CD8-positive, alpha-beta T cell (primary cell): ENCODE measurements at regions of chr1 and their contacts with region 1.

Region 1: DNA sequence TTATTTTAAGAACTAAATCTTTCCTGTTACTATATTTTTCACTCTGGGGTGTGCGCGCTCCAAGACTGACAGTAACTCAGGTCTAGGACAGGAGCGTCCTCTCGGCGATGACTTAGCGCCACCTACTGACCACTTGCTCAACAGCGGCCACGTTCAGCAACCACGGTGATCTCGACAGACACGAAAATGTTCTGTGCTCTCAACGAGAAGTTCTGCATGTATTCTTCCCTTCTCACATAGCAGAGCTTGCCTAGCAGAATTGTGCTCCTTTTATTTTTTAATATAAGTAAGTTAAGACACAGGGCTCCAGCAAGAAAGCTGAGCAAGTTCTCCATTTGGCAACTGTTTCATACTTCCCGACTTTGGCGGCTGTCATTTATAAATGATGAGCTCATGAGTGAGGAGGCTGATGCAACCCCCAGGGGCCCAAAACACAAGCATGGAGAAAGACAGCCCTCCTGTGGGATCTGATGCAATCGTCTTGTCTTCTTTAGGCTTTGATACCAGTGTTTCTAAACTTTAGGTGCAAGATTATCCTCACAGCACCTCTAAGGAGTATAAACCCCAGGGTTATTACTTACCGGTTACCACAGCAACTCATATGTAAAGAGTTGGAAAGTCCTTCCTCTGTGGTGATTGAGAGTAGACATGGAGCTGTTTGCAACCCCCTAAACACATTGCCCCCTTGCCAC is 92.6 kb downstream of the HHIPL2 start:
- DNase-seq: peak; percentile 68 to 91 (median 83)
- ATAC-seq: peak; percentile 99
- H3K4me3 ChIP-seq: no peak overlapping the region
- H3K4me3 Mint-ChIP-seq: peak overlapping the region; percentile 0
- H3K27ac ChIP-seq: no peak overlapping the region
- H3K27ac Mint-ChIP-seq: peak overlapping the region; percentile 2
- H3K4me1 ChIP-seq: peaks cover 6% of the 10 kb centered on the region
- H3K4me1 Mint-ChIP-seq: peaks cover 16% of the 10 kb centered on the region
- H3K27me3 ChIP-seq: no peaks in the 10 kb centered on the region
- H3K27me3 Mint-ChIP-seq: no peaks in the 10 kb centered on the region
- CTCF ChIP-seq: peak; percentile 90

Region 2: DNA sequence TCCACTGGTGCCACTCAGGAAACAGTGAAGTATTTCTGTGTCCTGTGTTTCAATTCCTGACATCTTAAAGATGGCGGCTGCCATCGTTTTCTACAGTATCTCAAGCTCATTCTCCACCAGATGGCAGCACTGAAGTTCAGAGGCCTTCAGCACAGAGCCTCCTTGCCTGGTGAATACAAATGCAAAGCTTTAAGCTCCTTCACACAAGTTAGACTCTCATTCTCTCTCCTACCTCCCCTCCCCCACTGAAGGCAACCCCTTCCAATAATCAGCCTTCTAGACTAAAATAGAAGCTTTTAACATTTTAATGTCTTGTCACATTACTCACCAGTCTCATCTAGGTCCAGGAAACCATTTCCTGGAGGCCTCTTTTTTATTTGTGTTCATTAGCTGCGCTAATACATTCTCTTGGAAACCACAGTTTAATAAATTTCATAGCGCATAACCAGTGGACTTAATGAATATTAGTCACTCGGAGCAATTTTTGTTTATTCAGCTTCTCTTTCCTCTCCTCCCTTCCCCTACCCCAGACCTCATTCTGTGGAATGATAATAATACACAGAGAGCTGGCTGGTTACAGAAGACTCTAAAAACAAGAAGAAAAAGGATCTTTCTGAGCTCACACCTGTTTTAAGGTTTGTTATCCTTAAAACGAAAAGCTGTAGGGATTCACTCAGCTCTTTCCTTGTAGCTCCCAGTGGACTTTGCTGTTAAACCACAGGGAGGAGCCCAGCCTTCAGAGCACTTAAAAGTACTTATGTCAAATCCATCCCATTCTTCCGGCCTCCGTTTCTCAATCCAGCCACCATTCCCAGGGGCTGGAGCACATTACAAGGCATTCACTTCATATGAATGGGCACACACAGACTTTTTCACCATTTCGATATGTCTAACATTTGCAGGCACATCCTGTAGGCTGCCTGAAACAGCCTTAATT is 1191.2 kb before region 1 on chr1:
- CTCF ChIA-PET with region 1: interaction called, 6 read pairs
- POLR2A ChIA-PET with region 1: no interaction called
- intact Hi-C with region 1: loop called in 1 of 2 experiments (anchors 10 kb)
- DNase-seq: peak in 6 of 9 experiments; percentile 5 to 53 (median 28)
- ATAC-seq: no peak
- H3K4me3 ChIP-seq: no peak overlapping the region
- H3K4me3 Mint-ChIP-seq: no peak overlapping the region
- H3K27ac ChIP-seq: no peak overlapping the region
- H3K27ac Mint-ChIP-seq: no peak overlapping the region
- H3K4me1 ChIP-seq: no peaks in the 10 kb centered on the region
- H3K4me1 Mint-ChIP-seq: no peaks in the 10 kb centered on the region
- H3K27me3 ChIP-seq: no peaks in the 10 kb centered on the region
- H3K27me3 Mint-ChIP-seq: peaks cover 9% of the 10 kb centered on the region
- CTCF ChIP-seq: peak; percentile 19

Region 3: DNA sequence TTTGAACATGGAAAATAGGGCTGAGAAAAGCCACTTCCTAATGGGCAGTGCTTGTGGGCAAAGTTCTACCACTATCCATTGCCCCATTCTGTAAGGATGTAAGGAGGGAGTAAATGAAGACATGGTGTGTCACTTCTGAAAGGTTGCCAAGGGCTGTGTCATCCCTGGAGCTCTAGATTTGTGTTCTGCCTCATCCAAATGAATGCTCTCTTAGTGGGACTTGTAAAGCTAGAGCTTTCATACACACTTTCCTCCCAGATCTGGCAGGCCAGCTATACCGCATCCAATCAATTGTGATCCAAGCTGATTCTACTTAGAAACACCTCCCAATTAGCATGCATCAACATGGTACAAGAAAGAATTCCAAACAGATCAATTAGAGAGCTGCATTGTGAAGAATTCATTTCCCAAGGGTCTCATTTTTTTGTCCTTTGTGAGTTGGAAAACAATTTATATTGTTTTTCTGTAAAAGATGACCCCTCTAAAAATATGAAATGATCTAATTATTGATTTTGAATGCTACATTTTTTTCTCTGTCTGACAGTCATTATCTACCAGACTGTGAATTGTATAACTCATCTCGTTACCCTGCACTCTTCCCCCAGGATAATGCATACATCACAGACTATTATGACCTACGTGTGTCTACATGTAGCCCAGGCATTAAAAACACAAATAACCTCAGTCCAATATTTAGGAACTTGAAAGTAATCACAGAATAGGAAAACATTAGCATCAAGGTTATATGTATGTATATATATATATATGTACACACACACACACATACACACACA is 596.3 kb before region 1 on chr1:
- CTCF ChIA-PET with region 1: no interaction called
- POLR2A ChIA-PET with region 1: no interaction called
- intact Hi-C with region 1: loop called in 1 of 2 experiments (anchors 10 kb)
- DNase-seq: no peak
- ATAC-seq: no peak
- H3K4me3 ChIP-seq: no peak overlapping the region
- H3K4me3 Mint-ChIP-seq: no peak overlapping the region
- H3K27ac ChIP-seq: no peak overlapping the region
- H3K27ac Mint-ChIP-seq: no peak overlapping the region
- H3K4me1 ChIP-seq: no peaks in the 10 kb centered on the region
- H3K4me1 Mint-ChIP-seq: no peaks in the 10 kb centered on the region
- H3K27me3 ChIP-seq: no peaks in the 10 kb centered on the region
- H3K27me3 Mint-ChIP-seq: no peaks in the 10 kb centered on the region
- CTCF ChIP-seq: no peak

Region 4: DNA sequence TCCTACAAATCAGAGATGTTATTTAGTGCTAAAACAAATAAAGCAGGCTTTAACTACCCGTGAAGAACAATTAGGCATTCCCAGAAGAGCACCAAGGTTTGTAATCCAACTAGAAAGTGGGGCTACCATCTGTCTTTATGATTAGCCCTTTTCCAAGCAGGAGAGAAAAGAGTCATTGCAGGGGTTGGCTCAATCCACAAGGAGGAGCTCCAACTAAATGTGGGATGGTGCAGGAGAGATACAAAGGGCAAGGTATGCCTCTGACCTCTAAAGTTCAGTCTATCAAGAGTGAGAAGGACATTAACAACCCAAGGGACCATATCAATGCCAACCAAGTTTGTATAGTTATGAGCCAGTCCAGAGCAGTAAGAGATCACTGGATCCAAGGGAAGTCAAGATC is 330.7 kb before region 1 on chr1:
- CTCF ChIA-PET with region 1: interaction called, 11 read pairs
- POLR2A ChIA-PET with region 1: no interaction called
- intact Hi-C with region 1: loop called in 1 of 2 experiments (anchors 1 kb)
- DNase-seq: peak in 1 of 9 experiments; percentile 7
- ATAC-seq: no peak
- H3K4me3 ChIP-seq: no peak overlapping the region
- H3K4me3 Mint-ChIP-seq: no peak overlapping the region
- H3K27ac ChIP-seq: no peak overlapping the region
- H3K27ac Mint-ChIP-seq: no peak overlapping the region
- H3K4me1 ChIP-seq: no peaks in the 10 kb centered on the region
- H3K4me1 Mint-ChIP-seq: peaks cover 5% of the 10 kb centered on the region
- H3K27me3 ChIP-seq: no peaks in the 10 kb centered on the region
- H3K27me3 Mint-ChIP-seq: peaks cover 5% of the 10 kb centered on the region
- CTCF ChIP-seq: no peak

Region 5: GRCh38 chr1:222420633-222421032 is 34.7 kb before region 1 on chr1:
- CTCF ChIA-PET with region 1: interaction called, 19 read pairs
- POLR2A ChIA-PET with region 1: no interaction called
- intact Hi-C with region 1: loop called in 1 of 2 experiments (anchors 5 kb)
- DNase-seq: peak in 8 of 9 experiments; percentile 4 to 70 (median 36)
- ATAC-seq: peak; percentile 96
- H3K4me3 ChIP-seq: peak overlapping the region in 1 of 2 experiments; percentile 24
- H3K4me3 Mint-ChIP-seq: peak overlapping the region; percentile 67
- H3K27ac ChIP-seq: peak overlapping the region; percentile 15 to 50
- H3K27ac Mint-ChIP-seq: peak overlapping the region; percentile 91
- H3K4me1 ChIP-seq: peaks cover 60% of the 10 kb centered on the region
- H3K4me1 Mint-ChIP-seq: peaks cover 66% of the 10 kb centered on the region
- H3K27me3 ChIP-seq: no peaks in the 10 kb centered on the region
- H3K27me3 Mint-ChIP-seq: no peaks in the 10 kb centered on the region
- CTCF ChIP-seq: no peak